ENCODE measurements at regions of chr12 and their contacts with region 1.

Region 1: GRCh38 chr12:54032627-54033100 is at the start of gene HOXC5:
- DNase-seq: peak; percentile 60 to 84
- ATAC-seq: peak; percentile 53 to 69 (median 65)
- H3K4me3 ChIP-seq: peak within 1 kb of the TSS; percentile 4
- H3K4me3 Mint-ChIP-seq: peak within 1 kb of the TSS; percentile 88
- H3K27ac ChIP-seq: no peak within 1 kb of the TSS
- H3K27ac Mint-ChIP-seq: peak within 1 kb of the TSS; percentile 45 to 75
- H3K4me1 ChIP-seq: peaks cover 26% of the 10 kb centered on the region
- H3K4me1 Mint-ChIP-seq: peaks cover 23 to 27% of the 10 kb centered on the region in 2 donors
- H3K27me3 ChIP-seq: peaks cover 88% of the 10 kb centered on the region
- H3K27me3 Mint-ChIP-seq: peaks cover 76 to 91% of the 10 kb centered on the region in 2 donors
- CTCF ChIP-seq: peak; percentile 95
- total RNA-seq, gene HOXC5: 0.20 TPM in 1 of 3 donors, not detected in the others

Region 2: DNA sequence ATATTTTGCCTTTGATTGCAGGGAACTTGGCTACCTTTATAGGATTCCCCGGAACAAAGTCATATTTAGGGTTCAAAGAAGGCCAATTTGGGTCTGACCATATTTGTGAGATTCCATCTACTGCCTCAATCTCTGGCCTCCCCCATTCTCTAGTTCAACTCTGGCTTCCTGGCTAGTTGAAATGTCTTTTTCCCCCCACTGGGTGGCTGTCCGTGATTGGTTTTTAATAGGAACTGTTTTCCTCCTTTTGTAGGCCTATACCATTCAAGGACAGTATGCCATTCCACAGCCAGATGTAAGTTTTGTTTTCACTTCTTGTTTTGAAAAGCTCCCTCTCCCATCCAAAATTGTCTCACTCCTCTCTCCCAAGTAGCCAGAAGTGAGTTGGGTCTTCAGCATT is 567.0 kb before region 1 on chr12:
- intact Hi-C with region 1: no loop called
- DNase-seq: no peak
- ATAC-seq: no peak
- H3K4me3 ChIP-seq: no peak overlapping the region
- H3K4me3 Mint-ChIP-seq: no peak overlapping the region
- H3K27ac ChIP-seq: no peak overlapping the region
- H3K27ac Mint-ChIP-seq: peak overlapping the region; percentile 48 to 64
- H3K4me1 ChIP-seq: no peaks in the 10 kb centered on the region
- H3K4me1 Mint-ChIP-seq: peaks cover 31 to 35% of the 10 kb centered on the region in 2 donors
- H3K27me3 ChIP-seq: no peaks in the 10 kb centered on the region
- H3K27me3 Mint-ChIP-seq: no peaks in the 10 kb centered on the region
- CTCF ChIP-seq: no peak

Region 3: GRCh38 chr12:53995378-53996239 is 37.1 kb before region 1 on chr12:
- intact Hi-C with region 1: loop called (anchors 5 kb)
- DNase-seq: peak in 1 of 2 donors; percentile 60
- ATAC-seq: peak; percentile 50 to 65 (median 53)
- H3K4me3 ChIP-seq: peak overlapping the region; percentile 43
- H3K4me3 Mint-ChIP-seq: peak overlapping the region; percentile 91
- H3K27ac ChIP-seq: no peak overlapping the region
- H3K27ac Mint-ChIP-seq: peak overlapping the region in 1 of 2 donors; percentile 81
- H3K4me1 ChIP-seq: peaks cover 49% of the 10 kb centered on the region
- H3K4me1 Mint-ChIP-seq: peaks cover 46 to 47% of the 10 kb centered on the region in 2 donors
- H3K27me3 ChIP-seq: peaks cover 92% of the 10 kb centered on the region
- H3K27me3 Mint-ChIP-seq: peaks cover 74 to 89% of the 10 kb centered on the region in 2 donors
- CTCF ChIP-seq: no peak

Region 4: GRCh38 chr12:54017878-54018467 is 14.7 kb before region 1 on chr12:
- intact Hi-C with region 1: loop called (anchors 2 kb)
- DNase-seq: peak; percentile 73 to 87
- ATAC-seq: peak; percentile 89 to 95 (median 90)
- H3K4me3 ChIP-seq: peak overlapping the region; percentile 55
- H3K4me3 Mint-ChIP-seq: peak overlapping the region; percentile 81
- H3K27ac ChIP-seq: peak overlapping the region; percentile 65
- H3K27ac Mint-ChIP-seq: peak overlapping the region; percentile 23 to 89
- H3K4me1 ChIP-seq: peaks cover 33% of the 10 kb centered on the region
- H3K4me1 Mint-ChIP-seq: peaks cover 14 to 37% of the 10 kb centered on the region in 2 donors
- H3K27me3 ChIP-seq: peaks cover 56% of the 10 kb centered on the region
- H3K27me3 Mint-ChIP-seq: peaks cover 39 to 55% of the 10 kb centered on the region in 2 donors
- CTCF ChIP-seq: no peak

Region 5: GRCh38 chr12:54082397-54082892 is 49.8 kb after region 1 on chr12:
- intact Hi-C with region 1: loop called (anchors 10 kb)
- DNase-seq: peak; percentile 61 to 70
- ATAC-seq: peak in 2 of 3 donors; percentile 64 to 66
- H3K4me3 ChIP-seq: peak overlapping the region; percentile 41
- H3K4me3 Mint-ChIP-seq: peak overlapping the region; percentile 95
- H3K27ac ChIP-seq: peak overlapping the region; percentile 82
- H3K27ac Mint-ChIP-seq: peak overlapping the region; percentile 90 to 99
- H3K4me1 ChIP-seq: peaks cover 22% of the 10 kb centered on the region
- H3K4me1 Mint-ChIP-seq: peaks cover 36 to 38% of the 10 kb centered on the region in 2 donors
- H3K27me3 ChIP-seq: no peaks in the 10 kb centered on the region
- H3K27me3 Mint-ChIP-seq: peaks cover 7 to 8% of the 10 kb centered on the region in 2 donors
- CTCF ChIP-seq: no peak

Region 6: GRCh38 chr12:54191550-54192022 is 158.9 kb after region 1 on chr12:
- intact Hi-C with region 1: loop called (anchors 1 kb)
- DNase-seq: peak; percentile 68 to 95
- ATAC-seq: peak; percentile 67 to 80 (median 70)
- H3K4me3 ChIP-seq: no peak overlapping the region
- H3K4me3 Mint-ChIP-seq: no peak overlapping the region
- H3K27ac ChIP-seq: no peak overlapping the region
- H3K27ac Mint-ChIP-seq: no peak overlapping the region
- H3K4me1 ChIP-seq: peaks cover 29% of the 10 kb centered on the region
- H3K4me1 Mint-ChIP-seq: peaks cover 11 to 34% of the 10 kb centered on the region in 2 donors
- H3K27me3 ChIP-seq: peaks cover 30% of the 10 kb centered on the region
- H3K27me3 Mint-ChIP-seq: peaks cover 28 to 39% of the 10 kb centered on the region in 2 donors
- CTCF ChIP-seq: peak; percentile 75